ENCODE measurements at regions of chr18 and their contacts with region 1.

Region 1: GRCh38 chr18:50203801-50204604 is 9.1 kb upstream of the MYO5B start:
- DNase-seq: no peak
- H3K4me3 ChIP-seq: no peak overlapping the region
- H3K27ac ChIP-seq: no peak overlapping the region
- H3K4me1 ChIP-seq: no peaks in the 10 kb centered on the region
- H3K27me3 ChIP-seq: no peaks in the 10 kb centered on the region
- CTCF ChIP-seq: peak; percentile 59 to 79

Region 2: GRCh38 chr18:49510393-49511115 is 693.4 kb before region 1 on chr18:
- CTCF ChIA-PET with region 1: no interaction called
- dilution Hi-C with region 1: loop called (anchors 25 kb)
- in situ Hi-C with region 1: loop called in 1 of 2 experiments (anchors 25 kb)
- intact Hi-C with region 1: loop called (anchors 5 kb)
- DNase-seq: peak; percentile 46
- H3K4me3 ChIP-seq: no peak overlapping the region
- H3K27ac ChIP-seq: no peak overlapping the region
- H3K4me1 ChIP-seq: no peaks in the 10 kb centered on the region
- H3K27me3 ChIP-seq: no peaks in the 10 kb centered on the region
- CTCF ChIP-seq: peak; percentile 92 to 93

Region 3: GRCh38 chr18:49898421-49898820 is 305.6 kb before region 1 on chr18:
- CTCF ChIA-PET with region 1: no interaction called
- dilution Hi-C with region 1: no loop called
- in situ Hi-C with region 1: loop called in 1 of 2 experiments (anchors 25 kb)
- intact Hi-C with region 1: loop called (anchors 10 kb)
- DNase-seq: peak; percentile 52
- H3K4me3 ChIP-seq: no peak overlapping the region
- H3K27ac ChIP-seq: no peak overlapping the region
- H3K4me1 ChIP-seq: no peaks in the 10 kb centered on the region
- H3K27me3 ChIP-seq: no peaks in the 10 kb centered on the region
- CTCF ChIP-seq: no peak

Region 4: DNA sequence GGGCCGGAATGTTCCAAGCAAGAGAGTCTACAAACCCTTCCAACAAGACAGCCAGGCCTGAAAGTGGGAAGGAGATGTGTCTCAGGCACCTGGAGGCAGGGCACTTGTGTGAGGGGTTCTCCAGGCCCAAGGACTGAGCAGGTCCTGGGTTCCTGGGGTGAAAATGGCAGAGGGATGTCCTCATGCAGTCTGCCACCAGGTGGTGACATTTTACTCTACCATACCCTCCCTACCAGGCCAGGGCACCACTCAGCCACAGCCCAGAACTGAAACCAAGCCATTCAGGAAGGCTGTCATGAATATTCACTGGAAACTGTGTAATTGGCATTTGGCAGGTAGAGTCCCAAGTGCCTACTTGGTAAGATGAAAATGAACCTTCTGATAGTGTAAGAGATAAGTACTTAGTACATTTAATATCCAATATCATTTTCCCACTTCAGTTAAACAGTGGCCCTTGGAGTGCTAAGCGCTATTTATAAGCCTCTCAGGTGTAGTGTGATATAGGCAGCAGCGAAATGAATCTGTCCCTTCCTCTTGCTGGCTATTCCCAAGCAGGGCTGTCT is 194.1 kb before region 1 on chr18:
- CTCF ChIA-PET with region 1: no interaction called
- dilution Hi-C with region 1: no loop called
- in situ Hi-C with region 1: no loop called
- intact Hi-C with region 1: loop called (anchors 2 kb)
- DNase-seq: peak; percentile 52
- H3K4me3 ChIP-seq: no peak overlapping the region
- H3K27ac ChIP-seq: no peak overlapping the region
- H3K4me1 ChIP-seq: peaks cover 16% of the 10 kb centered on the region
- H3K27me3 ChIP-seq: no peaks in the 10 kb centered on the region
- CTCF ChIP-seq: peak; percentile 64 to 78

Region 5: DNA sequence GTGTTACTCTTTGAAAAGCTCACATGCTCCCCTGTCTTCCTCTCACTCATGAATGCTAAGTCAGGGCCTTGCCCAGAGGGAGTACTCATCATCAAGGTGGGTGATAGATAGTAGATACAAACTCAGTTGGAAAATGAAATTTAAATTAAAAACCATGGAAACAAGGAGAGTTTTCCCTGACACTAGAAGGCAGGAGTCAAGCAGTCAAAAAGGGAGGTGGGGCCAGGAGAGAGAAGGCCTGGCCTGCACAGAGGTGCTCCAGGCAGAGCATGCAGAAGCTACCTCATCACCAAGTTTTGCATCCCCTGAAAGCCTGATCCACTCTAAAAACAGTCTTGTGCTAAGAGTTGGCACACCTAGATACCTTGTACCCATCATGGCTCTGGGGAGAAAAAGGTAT is 152.7 kb before region 1 on chr18:
- CTCF ChIA-PET with region 1: no interaction called
- dilution Hi-C with region 1: loop called (anchors 10 kb)
- in situ Hi-C with region 1: no loop called
- intact Hi-C with region 1: loop called (anchors 2 kb)
- DNase-seq: peak; percentile 32
- H3K4me3 ChIP-seq: no peak overlapping the region
- H3K27ac ChIP-seq: no peak overlapping the region
- H3K4me1 ChIP-seq: no peaks in the 10 kb centered on the region
- H3K27me3 ChIP-seq: no peaks in the 10 kb centered on the region
- CTCF ChIP-seq: peak; percentile 32 to 60

Region 6: GRCh38 chr18:50172367-50172766 is 31.6 kb before region 1 on chr18:
- CTCF ChIA-PET with region 1: no interaction called
- dilution Hi-C with region 1: no loop called
- in situ Hi-C with region 1: no loop called
- intact Hi-C with region 1: no loop called
- DNase-seq: peak; percentile 83
- H3K4me3 ChIP-seq: no peak overlapping the region
- H3K27ac ChIP-seq: no peak overlapping the region
- H3K4me1 ChIP-seq: no peaks in the 10 kb centered on the region
- H3K27me3 ChIP-seq: no peaks in the 10 kb centered on the region
- CTCF ChIP-seq: no peak

Region 7: GRCh38 chr18:50429207-50429948 is 225.4 kb after region 1 on chr18:
- CTCF ChIA-PET with region 1: no interaction called
- dilution Hi-C with region 1: no loop called
- in situ Hi-C with region 1: no loop called
- intact Hi-C with region 1: loop called (anchors 1 kb)
- DNase-seq: no peak
- H3K4me3 ChIP-seq: no peak overlapping the region
- H3K27ac ChIP-seq: no peak overlapping the region
- H3K4me1 ChIP-seq: no peaks in the 10 kb centered on the region
- H3K27me3 ChIP-seq: no peaks in the 10 kb centered on the region
- CTCF ChIP-seq: peak; percentile 31 to 43